GM12878 (cell line): ENCODE measurements at regions of chr17 and their contacts with region 1.

Region 1: DNA sequence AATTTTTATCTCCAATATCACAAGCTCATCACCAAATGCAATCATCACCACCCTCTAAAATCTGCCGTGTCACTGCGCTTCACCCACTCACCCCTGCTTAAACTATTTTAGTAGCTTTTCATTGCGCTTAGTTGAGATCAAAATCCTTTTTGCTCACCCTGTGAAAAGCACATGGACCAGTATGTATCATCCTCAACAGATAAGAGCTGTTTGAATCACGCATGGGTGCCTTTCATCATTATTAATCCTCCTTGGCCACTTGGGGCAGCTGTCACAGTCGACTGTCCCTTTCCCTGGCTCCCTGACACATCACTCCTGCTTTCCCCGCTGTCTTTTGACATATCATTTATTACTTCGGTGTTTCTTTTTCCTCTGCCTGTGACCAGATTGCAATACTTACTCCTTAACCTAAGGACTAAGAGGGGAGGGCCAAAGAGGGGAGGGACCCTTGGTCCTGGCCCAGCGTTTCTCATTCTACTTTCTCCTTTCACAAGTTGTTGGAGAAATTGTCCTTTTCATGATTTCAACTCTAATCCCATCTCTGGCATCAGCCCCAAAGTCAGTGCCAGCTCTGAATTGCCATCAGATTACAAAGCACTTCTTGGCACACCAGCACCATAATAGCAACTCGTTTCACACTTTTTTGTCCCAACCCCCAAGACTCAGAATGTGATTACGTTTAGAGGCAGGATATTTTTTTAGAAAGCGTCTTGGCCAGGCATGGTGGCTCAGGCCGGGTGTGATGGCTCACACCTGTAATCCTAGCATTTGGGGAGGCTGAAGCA is 8.6 kb upstream of the KDM6B start:
- DNase-seq: no peak
- ATAC-seq: 0 out of 3 replicates have a peak, but pooled peaks have one; percentile 28
- H3K4me3 ChIP-seq: no peak overlapping the region
- H3K27ac ChIP-seq: no peak overlapping the region
- H3K4me1 ChIP-seq: no peaks in the 10 kb centered on the region
- H3K27me3 ChIP-seq: no peaks in the 10 kb centered on the region; a peak in 1 of 4 replicates
- CTCF ChIP-seq: no peak; a peak in 1 of 6 replicates
- EP300 ChIP-seq: no peak
- POLR2A ChIP-seq: no peak
- RAD21 ChIP-seq: no peak

Region 2: GRCh38 chr17:7844292-7845154 is 19.1 kb after region 1 on chr17:
- CTCF ChIA-PET with region 1: interaction called, 16 read pairs
- POLR2A ChIA-PET with region 1: no interaction called
- RAD21 ChIA-PET with region 1: interaction called, 4 read pairs
- SMC1A ChIA-PET with region 1: interaction called, 4 read pairs
- in situ Hi-C with region 1: no loop called
- intact Hi-C with region 1: no loop called
- DNase-seq: peak; percentile 68
- ATAC-seq: peak; percentile 73
- H3K4me3 ChIP-seq: peak overlapping the region; percentile 92
- H3K27ac ChIP-seq: peak overlapping the region; percentile 95
- H3K4me1 ChIP-seq: peaks cover 26% of the 10 kb centered on the region
- H3K27me3 ChIP-seq: no peaks in the 10 kb centered on the region
- CTCF ChIP-seq: no peak
- EP300 ChIP-seq: peak; percentile 14 to 21; a peak in 1 of 4 replicates
- POLR2A ChIP-seq: peak; percentile 68
- RAD21 ChIP-seq: no peak